B cell (primary cell): ENCODE measurements at regions of chr7 and their contacts with region 1.

Region 1: GRCh38 chr7:121485467-121486243 is 89.5 kb upstream of the FAM3C start:
- DNase-seq: no peak
- ATAC-seq: no peak
- H3K4me3 ChIP-seq: no peak overlapping the region
- H3K4me3 Mint-ChIP-seq: no peak overlapping the region
- H3K27ac ChIP-seq: no peak overlapping the region
- H3K27ac Mint-ChIP-seq: no peak overlapping the region
- H3K4me1 ChIP-seq: peaks cover 0 to 2% of the 10 kb centered on the region in 2 donors
- H3K4me1 Mint-ChIP-seq: peaks cover 3% of the 10 kb centered on the region
- H3K27me3 ChIP-seq: no peaks in the 10 kb centered on the region
- H3K27me3 Mint-ChIP-seq: peaks cover 11% of the 10 kb centered on the region
- CTCF ChIP-seq: no peak

Region 2: GRCh38 chr7:121204537-121204936 is 281.1 kb before region 1 on chr7:
- CTCF ChIA-PET with region 1: no interaction called
- POLR2A ChIA-PET with region 1: no interaction called
- intact Hi-C with region 1: no loop called
- DNase-seq: no peak
- ATAC-seq: no peak
- H3K4me3 ChIP-seq: no peak overlapping the region
- H3K4me3 Mint-ChIP-seq: no peak overlapping the region
- H3K27ac ChIP-seq: no peak overlapping the region
- H3K27ac Mint-ChIP-seq: no peak overlapping the region
- H3K4me1 ChIP-seq: peaks cover 31 to 36% of the 10 kb centered on the region in 2 donors
- H3K4me1 Mint-ChIP-seq: peaks cover 45% of the 10 kb centered on the region
- H3K27me3 ChIP-seq: no peaks in the 10 kb centered on the region
- H3K27me3 Mint-ChIP-seq: no peaks in the 10 kb centered on the region
- CTCF ChIP-seq: no peak

Region 3: DNA sequence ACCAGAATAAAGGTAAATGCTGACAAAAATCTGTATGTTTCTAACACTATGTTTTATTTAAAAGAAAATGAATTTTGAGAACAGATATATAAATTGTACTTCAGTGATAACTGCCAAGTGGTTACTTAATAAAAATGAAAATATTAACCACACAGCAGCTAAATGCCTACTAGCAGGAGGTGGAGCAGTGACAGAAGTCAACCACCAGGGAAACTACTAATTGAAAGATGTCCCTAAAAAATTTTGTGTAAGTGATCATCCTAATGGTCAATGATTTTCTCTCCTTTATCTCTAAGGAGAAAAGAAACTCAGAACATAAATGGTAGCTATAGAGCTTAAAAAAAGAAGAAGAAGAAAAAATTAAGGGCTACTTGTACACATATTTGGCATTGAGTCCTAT is 134.0 kb before region 1 on chr7:
- CTCF ChIA-PET with region 1: no interaction called
- POLR2A ChIA-PET with region 1: no interaction called
- intact Hi-C with region 1: no loop called
- DNase-seq: no peak
- ATAC-seq: peak; percentile 28
- H3K4me3 ChIP-seq: no peak overlapping the region
- H3K4me3 Mint-ChIP-seq: no peak overlapping the region
- H3K27ac ChIP-seq: peak overlapping the region in 1 of 2 donors; percentile 29
- H3K27ac Mint-ChIP-seq: peak overlapping the region; percentile 80
- H3K4me1 ChIP-seq: no peaks in the 10 kb centered on the region
- H3K4me1 Mint-ChIP-seq: peaks cover 8% of the 10 kb centered on the region
- H3K27me3 ChIP-seq: no peaks in the 10 kb centered on the region
- H3K27me3 Mint-ChIP-seq: no peaks in the 10 kb centered on the region
- CTCF ChIP-seq: peak; percentile 35

Region 4: DNA sequence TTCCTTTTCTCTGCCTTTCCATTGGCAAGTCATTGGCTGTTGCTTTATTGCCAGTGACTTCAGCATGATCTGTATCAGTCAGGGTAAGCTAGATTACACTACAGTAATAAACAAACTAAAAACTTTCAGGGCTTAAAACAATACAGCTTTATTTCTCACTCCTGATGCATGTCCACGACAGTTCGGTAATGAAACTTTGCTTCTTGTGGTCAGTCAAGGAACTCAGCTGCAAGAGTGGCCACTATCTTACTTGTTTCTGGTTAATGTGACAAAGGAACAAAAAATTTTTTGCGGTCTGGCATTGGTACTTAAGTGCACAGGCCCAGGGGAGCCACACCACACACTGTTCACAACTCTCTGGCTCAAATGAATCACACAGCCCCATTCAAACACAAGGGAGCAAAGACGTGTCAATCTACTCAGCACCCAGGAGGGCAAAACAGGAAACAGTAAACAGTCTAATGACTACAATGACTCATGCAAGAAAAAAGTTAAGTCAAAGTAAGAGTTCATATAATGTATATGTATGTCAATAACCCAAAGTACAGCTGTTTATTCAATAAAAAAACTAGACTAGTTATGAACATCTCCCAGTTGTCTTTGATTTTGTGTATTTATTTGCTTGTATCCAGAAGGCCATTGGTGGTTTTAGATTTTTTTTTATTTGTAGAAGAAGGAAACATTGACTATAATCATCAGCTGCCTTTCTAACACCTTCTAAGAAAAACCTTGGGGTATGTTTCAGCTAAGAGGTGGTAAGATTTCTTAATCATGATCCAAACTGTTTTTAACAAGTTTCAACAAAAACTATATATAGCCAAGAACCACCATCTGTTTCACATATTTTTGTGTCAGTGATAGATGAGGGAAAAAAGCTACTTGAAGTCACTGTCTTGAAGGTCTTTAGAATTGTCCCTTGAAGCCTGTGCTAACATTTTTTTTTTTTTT is 44.8 kb after region 1 on chr7:
- CTCF ChIA-PET with region 1: no interaction called
- POLR2A ChIA-PET with region 1: no interaction called
- intact Hi-C with region 1: loop called (anchors 5 kb)
- DNase-seq: peak; percentile 23
- ATAC-seq: peak; percentile 98
- H3K4me3 ChIP-seq: no peak overlapping the region
- H3K4me3 Mint-ChIP-seq: no peak overlapping the region
- H3K27ac ChIP-seq: no peak overlapping the region
- H3K27ac Mint-ChIP-seq: peak overlapping the region; percentile 39
- H3K4me1 ChIP-seq: peaks cover 0 to 6% of the 10 kb centered on the region in 2 donors
- H3K4me1 Mint-ChIP-seq: peaks cover 11% of the 10 kb centered on the region
- H3K27me3 ChIP-seq: peaks cover 0 to 3% (median 1%) of the 10 kb centered on the region in 4 experiments
- H3K27me3 Mint-ChIP-seq: peaks cover 5% of the 10 kb centered on the region
- CTCF ChIP-seq: no peak